ENCODE measurements at regions of chr12 and their contacts with region 1.

Region 1: GRCh38 chr12:51025836-51026638 is at the start of gene SLC11A2:
- DNase-seq: peak; percentile 84 to 98
- H3K4me3 ChIP-seq: peak within 1 kb of the TSS; percentile 68 to 94
- H3K27ac ChIP-seq: peak within 1 kb of the TSS; percentile 91 to 98
- H3K4me1 ChIP-seq: peaks cover 6 to 17% of the 10 kb centered on the region in 2 donors
- H3K27me3 ChIP-seq: no peaks in the 10 kb centered on the region
- CTCF ChIP-seq: peak in 1 of 3 experiments; percentile 18
- total RNA-seq, gene SLC11A2: 21.5 TPM

Region 2: DNA sequence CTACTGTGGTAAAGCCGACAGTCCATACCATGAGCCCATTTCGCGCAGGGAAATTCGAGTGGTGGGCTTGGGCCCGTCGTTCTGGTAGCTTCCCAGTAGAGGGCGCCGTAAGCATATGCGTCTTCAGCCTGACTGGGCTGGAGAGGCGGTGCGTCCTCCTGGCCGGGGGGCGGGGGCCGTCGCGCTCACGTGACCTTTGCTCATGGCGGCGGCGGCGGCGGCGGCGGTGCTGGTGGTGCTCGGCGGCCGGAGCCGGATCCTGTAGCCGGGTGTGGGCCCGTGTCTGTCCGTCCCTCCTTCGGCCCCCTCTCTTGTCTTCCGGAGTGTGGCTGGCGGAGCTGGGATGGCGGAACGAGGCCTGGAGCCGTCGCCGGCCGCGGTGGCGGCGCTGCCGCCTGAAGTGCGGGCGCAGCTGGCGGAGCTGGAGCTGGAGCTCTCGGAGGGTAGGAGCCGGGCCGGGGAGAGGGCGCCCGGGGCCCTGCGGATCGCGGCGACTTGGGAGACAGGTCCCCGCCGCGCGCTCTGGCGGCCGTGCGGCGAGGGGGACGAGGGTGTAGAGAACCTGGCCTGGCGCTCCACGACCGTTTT is 521.1 kb before region 1 on chr12 and contains the start of gene DIP2B:
- intact Hi-C with region 1: loop called (anchors 10 kb)
- DNase-seq: peak; percentile 82 to 97
- H3K4me3 ChIP-seq: peak within 1 kb of the TSS; percentile 54 to 85
- H3K27ac ChIP-seq: peak within 1 kb of the TSS; percentile 86 to 92
- H3K4me1 ChIP-seq: peaks cover 2 to 22% of the 10 kb centered on the region in 2 donors
- H3K27me3 ChIP-seq: no peaks in the 10 kb centered on the region
- CTCF ChIP-seq: peak; percentile 87 to 98 (median 91)
- total RNA-seq, gene DIP2B: 8.5 TPM

Region 3: GRCh38 chr12:50825372-50825838 is 200.6 kb before region 1 on chr12:
- intact Hi-C with region 1: loop called (anchors 1 kb)
- DNase-seq: no peak
- H3K4me3 ChIP-seq: no peak overlapping the region
- H3K27ac ChIP-seq: peak overlapping the region; percentile 50 to 51
- H3K4me1 ChIP-seq: no peaks in the 10 kb centered on the region
- H3K27me3 ChIP-seq: no peaks in the 10 kb centered on the region
- CTCF ChIP-seq: peak; percentile 37 to 45 (median 44)

Region 4: DNA sequence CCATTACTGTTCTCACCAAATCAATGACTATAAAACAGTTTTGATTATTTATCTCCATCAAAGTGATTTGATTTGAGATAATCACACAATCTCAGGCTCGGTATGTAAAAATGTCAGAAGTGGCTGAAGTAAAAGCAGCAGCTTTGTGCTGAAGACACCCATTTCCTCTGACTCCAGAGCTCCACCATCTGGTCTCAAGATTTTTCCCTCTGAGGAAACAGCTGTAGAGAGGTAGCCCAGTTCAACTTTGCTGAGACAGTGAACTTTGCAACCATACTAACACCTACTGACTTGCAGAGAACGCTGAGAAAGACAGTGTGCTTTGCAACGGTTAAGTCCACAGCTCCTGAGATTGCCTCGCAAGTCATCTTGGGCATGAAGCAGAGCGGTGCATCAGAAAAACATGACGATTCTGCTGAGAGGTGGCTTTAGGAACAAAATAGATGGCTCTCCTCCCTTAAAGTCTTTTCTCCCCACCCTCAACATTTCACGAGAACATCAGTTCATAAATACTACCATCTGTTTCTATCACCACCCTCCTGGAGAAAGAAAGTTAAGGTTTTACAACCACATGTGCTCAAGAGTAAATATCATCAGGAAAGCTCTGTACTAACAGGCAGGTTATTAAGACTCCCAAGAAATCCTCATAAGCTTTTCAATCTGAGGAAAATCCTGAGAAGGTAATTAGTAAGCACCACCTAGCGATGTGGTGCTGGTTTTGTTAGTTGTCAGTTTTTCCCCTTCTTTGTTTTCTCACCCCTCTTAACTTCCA is 38.9 kb before region 1 on chr12:
- intact Hi-C with region 1: loop called (anchors 1 kb)
- DNase-seq: peak in 1 of 2 donors; percentile 67
- H3K4me3 ChIP-seq: no peak overlapping the region
- H3K27ac ChIP-seq: peak overlapping the region in 1 of 2 donors; percentile 81
- H3K4me1 ChIP-seq: peaks cover 7 to 35% of the 10 kb centered on the region in 2 donors
- H3K27me3 ChIP-seq: no peaks in the 10 kb centered on the region
- CTCF ChIP-seq: peak; percentile 48 to 72 (median 56)

Region 5: GRCh38 chr12:51083126-51083833 is 57.2 kb after region 1 on chr12 and contains the start of gene CSRNP2:
- intact Hi-C with region 1: loop called (anchors 1 kb)
- DNase-seq: peak; percentile 90 to 98
- H3K4me3 ChIP-seq: peak within 1 kb of the TSS; percentile 91 to 99
- H3K27ac ChIP-seq: peak within 1 kb of the TSS; percentile 95 to 99
- H3K4me1 ChIP-seq: peaks cover 5 to 13% of the 10 kb centered on the region in 2 donors
- H3K27me3 ChIP-seq: no peaks in the 10 kb centered on the region
- CTCF ChIP-seq: no peak
- total RNA-seq, gene CSRNP2: 13.6 TPM

Region 6: DNA sequence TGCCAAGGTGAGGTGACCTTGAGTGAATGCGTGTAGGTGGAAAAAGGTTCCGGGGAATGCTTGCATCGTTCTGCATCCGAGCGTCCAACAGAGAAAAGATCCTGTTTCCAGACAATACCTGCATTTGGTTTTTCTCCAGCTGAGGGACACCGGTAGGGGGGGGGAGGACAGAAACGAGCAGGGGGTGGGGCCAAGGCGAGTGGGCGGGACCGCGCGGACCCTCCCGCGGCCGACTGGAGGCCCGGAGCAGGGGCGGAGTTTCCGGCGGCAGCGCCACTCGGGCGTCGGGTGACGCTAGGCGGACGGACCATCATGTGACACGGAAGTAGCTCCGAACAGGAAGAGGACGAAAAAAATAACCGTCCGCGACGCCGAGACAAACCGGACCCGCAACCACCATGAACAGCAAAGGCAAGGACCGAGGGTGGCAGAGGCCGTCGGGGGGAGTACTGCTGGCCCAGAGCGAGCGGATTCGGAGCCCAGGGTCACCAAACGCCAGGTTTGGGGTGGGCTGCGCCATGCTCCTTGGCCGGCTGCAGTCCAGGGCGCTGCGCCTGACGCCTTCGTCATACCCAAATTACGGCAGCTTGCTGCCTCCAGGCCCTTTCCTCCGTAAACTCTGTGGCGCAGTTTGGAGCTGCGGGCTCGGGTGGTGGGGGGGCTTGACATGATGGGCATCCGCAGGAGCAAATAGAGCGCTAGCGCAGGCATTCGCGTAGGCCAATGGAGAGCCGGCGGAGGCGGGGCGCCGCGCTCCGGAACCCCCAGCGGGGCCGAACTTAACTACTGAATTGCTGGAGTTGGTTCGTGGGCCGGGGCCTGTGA is 212.7 kb after region 1 on chr12 and contains the start of gene DAZAP2:
- intact Hi-C with region 1: loop called (anchors 5 kb)
- DNase-seq: peak; percentile 85 to 97
- H3K4me3 ChIP-seq: peak within 1 kb of the TSS; percentile 74 to 96
- H3K27ac ChIP-seq: peak within 1 kb of the TSS; percentile 99
- H3K4me1 ChIP-seq: peaks cover 14 to 25% of the 10 kb centered on the region in 2 donors
- H3K27me3 ChIP-seq: no peaks in the 10 kb centered on the region
- CTCF ChIP-seq: no peak
- total RNA-seq, gene DAZAP2: 212 TPM